ENCODE measurements at regions of chr15 and their contacts with region 1.

Region 1: GRCh38 chr15:67999320-68000100 is 54.6 kb upstream of the PIAS1 start:
- DNase-seq: no peak
- ATAC-seq: no peak
- H3K4me3 ChIP-seq: no peak overlapping the region
- H3K27ac ChIP-seq: peak overlapping the region; percentile 14; the same call in 1 of the 2 replicates
- H3K4me1 ChIP-seq: peaks cover 10% of the 10 kb centered on the region
- H3K27me3 ChIP-seq: no peaks in the 10 kb centered on the region
- CTCF ChIP-seq: no peak

Region 2: DNA sequence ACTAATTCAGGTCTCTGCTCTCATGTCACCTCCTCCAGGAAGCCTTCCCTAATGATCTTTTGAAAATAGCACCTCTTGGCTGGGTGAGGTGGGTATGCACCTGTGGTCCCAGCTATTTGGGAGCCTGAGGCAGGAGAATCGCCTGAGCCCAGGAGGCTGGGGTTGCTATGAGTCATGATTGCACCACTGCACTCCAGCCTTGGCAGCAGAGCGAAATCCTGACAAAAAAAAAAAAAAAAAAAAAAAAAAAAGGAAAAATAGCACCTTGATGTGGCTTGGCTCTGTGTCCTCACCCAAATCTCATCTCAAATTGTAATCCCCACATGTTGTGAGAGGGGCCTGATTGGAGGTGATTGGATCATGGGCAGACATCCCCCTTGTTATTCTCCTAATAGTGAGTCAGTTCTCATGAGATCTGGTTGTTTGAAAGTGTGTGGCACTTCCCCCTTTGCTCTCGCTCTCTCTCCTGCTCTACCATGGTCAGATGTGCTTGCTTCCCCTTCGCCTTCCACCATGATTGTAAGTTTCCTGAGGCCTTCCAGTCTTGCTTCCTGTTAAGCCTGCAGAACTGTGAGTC is 148.4 kb before region 1 on chr15:
- CTCF ChIA-PET with region 1: no interaction called
- POLR2A ChIA-PET with region 1: no interaction called
- in situ Hi-C with region 1: loop called (anchors 10 kb)
- intact Hi-C with region 1: no loop called
- DNase-seq: no peak
- ATAC-seq: peak; percentile 37; the same call in 1 of the 2 replicates
- H3K4me3 ChIP-seq: no peak overlapping the region
- H3K27ac ChIP-seq: peak overlapping the region; percentile 45; the same call in 1 of the 2 replicates
- H3K4me1 ChIP-seq: peaks cover 18% of the 10 kb centered on the region
- H3K27me3 ChIP-seq: no peaks in the 10 kb centered on the region
- CTCF ChIP-seq: no peak

Region 3: GRCh38 chr15:67945951-67946700 is 53.4 kb before region 1 on chr15:
- CTCF ChIA-PET with region 1: no interaction called
- POLR2A ChIA-PET with region 1: no interaction called
- in situ Hi-C with region 1: no loop called
- intact Hi-C with region 1: no loop called
- DNase-seq: no peak
- ATAC-seq: peak; percentile 87
- H3K4me3 ChIP-seq: no peak overlapping the region
- H3K27ac ChIP-seq: peak overlapping the region; percentile 82
- H3K4me1 ChIP-seq: peaks cover 42% of the 10 kb centered on the region
- H3K27me3 ChIP-seq: no peaks in the 10 kb centered on the region
- CTCF ChIP-seq: no peak

Region 4: DNA sequence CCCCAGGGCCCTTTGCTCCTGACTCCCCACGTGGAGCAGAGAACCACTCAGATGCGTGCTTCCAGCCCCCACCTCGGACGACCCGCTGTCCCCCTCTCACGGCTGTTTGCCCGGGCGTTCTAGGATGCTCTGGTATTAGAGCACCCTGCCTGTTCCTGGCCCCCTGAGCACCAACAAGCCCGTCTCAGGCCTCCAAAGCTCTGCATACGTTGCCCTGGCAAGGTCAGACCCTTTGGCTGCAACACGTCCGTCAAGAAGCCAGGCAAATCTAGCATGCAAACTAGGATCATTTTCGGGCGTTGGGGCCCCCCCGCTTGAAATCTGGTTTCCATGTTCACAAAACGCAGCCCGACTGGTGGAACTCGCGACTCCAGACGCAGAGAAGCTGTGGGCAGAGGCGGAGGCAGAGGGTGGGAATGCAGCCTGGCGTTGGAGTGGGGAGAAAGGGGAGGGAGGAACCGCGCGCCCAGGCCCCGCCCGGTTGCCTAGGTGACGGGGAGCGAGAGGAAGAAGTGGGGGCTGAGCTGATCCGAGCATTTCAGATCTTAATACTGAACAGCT is 31.6 kb before region 1 on chr15:
- CTCF ChIA-PET with region 1: no interaction called
- POLR2A ChIA-PET with region 1: no interaction called
- in situ Hi-C with region 1: no loop called
- intact Hi-C with region 1: no loop called
- DNase-seq: no peak
- ATAC-seq: peak; percentile 92
- H3K4me3 ChIP-seq: peak overlapping the region; percentile 17 to 30
- H3K27ac ChIP-seq: peak overlapping the region; percentile 76
- H3K4me1 ChIP-seq: peaks cover 9% of the 10 kb centered on the region
- H3K27me3 ChIP-seq: no peaks in the 10 kb centered on the region
- CTCF ChIP-seq: no peak